Mucosa of descending colon (tissue), 3 donors: ENCODE measurements at regions of chr9 and their contacts with region 1.

Region 1: DNA sequence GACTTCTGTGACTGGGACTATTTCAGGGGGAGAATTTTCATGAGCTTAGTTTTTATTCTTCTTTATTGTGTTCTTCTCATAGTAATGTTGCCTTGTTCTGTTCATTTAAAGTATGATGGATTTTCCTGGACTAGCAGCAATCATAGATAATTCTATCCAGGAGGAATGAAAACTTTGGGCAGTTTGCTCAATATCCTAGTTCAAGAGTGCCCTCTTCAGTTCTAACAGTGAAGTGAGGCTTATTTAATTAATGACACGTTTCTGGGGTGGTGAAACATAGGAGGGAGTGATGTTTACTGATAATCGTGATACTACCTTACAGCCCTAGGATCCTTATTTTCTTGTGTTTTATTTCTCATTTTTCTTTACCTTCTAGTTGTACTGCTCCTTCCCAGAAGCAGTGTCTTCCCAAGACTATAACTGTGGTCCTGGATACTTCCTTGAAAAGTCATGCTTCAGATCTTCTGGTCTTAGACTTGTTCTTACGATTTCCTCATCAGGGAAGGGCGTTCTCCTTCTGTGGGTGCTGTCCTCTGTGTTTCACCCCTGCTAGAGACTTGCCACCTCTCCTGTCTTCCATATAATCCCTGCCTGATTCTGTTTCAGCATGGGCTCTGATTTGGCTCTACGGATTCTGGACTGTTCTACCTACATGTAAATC is 57.4 kb downstream of the CFAP95 start:
- DNase-seq: no peak
- ATAC-seq: peak; percentile 76
- H3K4me3 ChIP-seq: no peak overlapping the region
- H3K4me1 ChIP-seq: no peaks in the 10 kb centered on the region
- CTCF ChIP-seq: peak; percentile 28

Region 2: DNA sequence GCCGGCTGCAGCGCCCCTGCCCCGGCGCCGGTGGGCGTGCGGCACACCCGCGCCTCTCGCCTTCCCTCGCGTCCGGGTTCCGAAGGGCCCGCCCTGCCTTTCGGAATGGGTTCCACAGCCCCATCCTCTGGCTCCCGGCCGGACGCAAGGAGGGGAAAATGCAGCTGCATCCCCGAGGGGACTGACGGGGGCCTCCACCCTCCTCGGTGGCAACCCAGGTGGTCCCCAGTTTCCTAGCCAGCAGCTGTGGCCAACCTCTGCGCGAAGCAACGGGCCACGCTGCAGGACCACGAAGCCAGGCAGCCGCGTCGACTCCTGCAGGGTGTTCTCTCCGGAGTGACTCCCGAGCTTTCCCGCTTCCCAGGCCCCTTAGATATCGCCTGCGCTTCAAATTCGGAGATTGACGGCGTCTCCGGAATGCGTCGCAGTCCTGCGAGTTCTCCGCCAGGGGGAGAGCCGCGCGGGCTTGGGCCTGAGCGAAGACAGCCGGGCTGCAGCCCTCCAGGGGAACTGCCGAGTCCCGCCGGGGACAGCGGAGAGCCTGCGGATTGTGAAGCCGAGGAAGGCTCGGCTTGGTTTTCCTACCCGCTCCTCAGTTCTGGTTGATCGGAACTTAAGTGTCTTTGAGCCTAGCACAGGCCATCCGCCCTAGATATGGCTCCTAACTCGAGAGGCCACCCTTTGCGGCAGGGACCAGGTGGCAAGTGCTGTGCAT is 205.2 kb before region 1 on chr9:
- intact Hi-C with region 1: loop called in 1 of 2 experiments (anchors 5 kb)
- DNase-seq: peak; percentile 82 to 90 (median 86)
- ATAC-seq: peak; percentile 90
- H3K4me3 ChIP-seq: peak overlapping the region; percentile 37
- H3K4me1 ChIP-seq: peaks cover 4% of the 10 kb centered on the region
- CTCF ChIP-seq: peak; percentile 90

Region 3: GRCh38 chr9:69696802-69697201 is 181.2 kb before region 1 on chr9:
- intact Hi-C with region 1: no loop called
- DNase-seq: no peak
- ATAC-seq: no peak
- H3K4me3 ChIP-seq: no peak overlapping the region
- H3K4me1 ChIP-seq: no peaks in the 10 kb centered on the region
- CTCF ChIP-seq: no peak

Region 4: DNA sequence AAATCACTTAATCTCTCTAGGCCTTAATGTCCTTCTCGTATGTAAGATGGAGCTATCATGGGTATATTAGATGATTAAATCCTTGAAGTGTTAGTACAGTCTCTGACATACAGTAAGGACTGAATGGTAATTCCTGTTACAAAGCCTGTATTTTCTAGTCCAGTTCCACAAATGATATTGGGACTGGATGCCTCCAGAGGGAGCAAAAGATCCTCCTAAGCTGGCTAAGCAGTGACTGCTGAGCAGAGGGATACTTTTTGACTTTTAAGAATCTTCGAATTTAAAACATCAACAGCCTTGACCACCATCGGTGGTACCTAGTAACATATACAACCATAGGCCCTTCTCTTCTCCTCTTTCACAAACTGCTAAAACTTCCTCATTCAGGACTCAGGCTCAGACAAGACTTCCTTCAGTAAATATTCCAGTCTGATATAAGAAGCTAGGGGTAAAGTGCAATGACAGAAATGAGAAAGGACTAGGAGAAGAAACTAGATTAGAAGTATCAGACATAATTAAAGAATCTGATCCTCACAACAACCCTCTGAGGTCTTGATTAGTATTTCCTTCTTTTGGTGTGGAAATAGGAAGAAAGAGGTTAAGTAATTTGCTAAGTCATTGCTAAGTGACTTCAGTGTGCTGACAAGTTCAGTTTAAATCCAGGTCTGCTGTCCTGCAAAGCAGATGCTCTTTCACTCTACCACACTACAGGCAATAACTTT is 132.1 kb before region 1 on chr9:
- intact Hi-C with region 1: loop called in 1 of 2 experiments (anchors 10 kb)
- DNase-seq: no peak
- ATAC-seq: peak; percentile 69
- H3K4me3 ChIP-seq: no peak overlapping the region
- H3K4me1 ChIP-seq: no peaks in the 10 kb centered on the region
- CTCF ChIP-seq: no peak